CD4-positive, alpha-beta memory T cell (primary cell): ENCODE measurements at regions of chr15 and their contacts with region 1.

Region 1: GRCh38 chr15:73927476-73928240 is 1.4 kb downstream of the LOXL1 start:
- DNase-seq: peak; percentile 80 to 87 (median 84)
- H3K4me3 ChIP-seq: peak overlapping the region in 1 of 2 donors; percentile 58
- H3K4me3 Mint-ChIP-seq: peak overlapping the region; percentile 76 to 89 (median 84)
- H3K27ac ChIP-seq: peak overlapping the region; percentile 77
- H3K27ac Mint-ChIP-seq: peak overlapping the region; percentile 41 to 92 (median 85)
- H3K4me1 ChIP-seq: peaks cover 66% of the 10 kb centered on the region
- H3K4me1 Mint-ChIP-seq: peaks cover 30 to 67% (median 48%) of the 10 kb centered on the region in 4 donors
- H3K27me3 ChIP-seq: no peaks in the 10 kb centered on the region
- H3K27me3 Mint-ChIP-seq: no peaks in the 10 kb centered on the region

Region 2: GRCh38 chr15:73873889-73874511 is 53.7 kb before region 1 on chr15:
- CTCF ChIA-PET with region 1: interaction called, 20 read pairs
- POLR2A ChIA-PET with region 1: no interaction called
- intact Hi-C with region 1: loop called (anchors 2 kb)
- DNase-seq: peak in 4 of 5 donors; percentile 44 to 50 (median 46)
- H3K4me3 ChIP-seq: no peak overlapping the region
- H3K4me3 Mint-ChIP-seq: no peak overlapping the region
- H3K27ac ChIP-seq: no peak overlapping the region
- H3K27ac Mint-ChIP-seq: no peak overlapping the region
- H3K4me1 ChIP-seq: no peaks in the 10 kb centered on the region
- H3K4me1 Mint-ChIP-seq: no peaks in the 10 kb centered on the region
- H3K27me3 ChIP-seq: peaks cover 5% of the 10 kb centered on the region
- H3K27me3 Mint-ChIP-seq: peaks cover 31 to 33% of the 10 kb centered on the region in 2 donors

Region 3: DNA sequence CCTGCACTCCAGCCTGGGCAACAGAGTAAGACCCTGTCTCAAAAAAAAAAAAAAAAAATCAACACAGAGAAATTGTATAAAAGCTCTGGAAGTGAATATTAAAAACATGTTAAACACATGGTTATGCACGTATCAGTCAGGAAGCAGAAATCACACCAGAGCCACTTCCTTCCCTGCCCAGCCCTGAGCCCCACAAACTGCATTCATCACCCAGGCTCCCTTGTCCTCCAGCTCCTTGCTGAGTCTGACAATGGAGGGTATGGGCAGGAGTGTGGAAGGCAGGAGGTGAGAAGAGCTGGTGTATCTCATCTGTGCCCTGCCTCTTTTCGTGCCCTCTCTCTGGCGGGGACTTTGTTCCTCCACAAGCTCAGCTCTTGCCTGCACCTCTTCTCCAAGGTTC is 13.5 kb before region 1 on chr15:
- CTCF ChIA-PET with region 1: interaction called, 18 read pairs
- POLR2A ChIA-PET with region 1: interaction called, 7 read pairs
- intact Hi-C with region 1: no loop called
- DNase-seq: no peak
- H3K4me3 ChIP-seq: no peak overlapping the region
- H3K4me3 Mint-ChIP-seq: peak overlapping the region in 6 of 8 donors; percentile 12 to 49 (median 32)
- H3K27ac ChIP-seq: no peak overlapping the region
- H3K27ac Mint-ChIP-seq: peak overlapping the region in 3 of 7 donors; percentile 30 to 80 (median 71)
- H3K4me1 ChIP-seq: peaks cover 6% of the 10 kb centered on the region
- H3K4me1 Mint-ChIP-seq: peaks cover 6 to 31% (median 17%) of the 10 kb centered on the region in 4 donors
- H3K27me3 ChIP-seq: no peaks in the 10 kb centered on the region
- H3K27me3 Mint-ChIP-seq: peaks cover 0 to 2% of the 10 kb centered on the region in 2 donors

Region 4: GRCh38 chr15:73950831-73951561 is 23.3 kb after region 1 on chr15:
- CTCF ChIA-PET with region 1: interaction called, 16 read pairs
- POLR2A ChIA-PET with region 1: interaction called, 7 read pairs
- intact Hi-C with region 1: no loop called
- DNase-seq: peak; percentile 63 to 66 (median 64)
- H3K4me3 ChIP-seq: no peak overlapping the region
- H3K4me3 Mint-ChIP-seq: peak overlapping the region in 2 of 8 donors; percentile 39 to 59
- H3K27ac ChIP-seq: peak overlapping the region; percentile 5
- H3K27ac Mint-ChIP-seq: peak overlapping the region; percentile 19 to 97 (median 94)
- H3K4me1 ChIP-seq: peaks cover 5% of the 10 kb centered on the region
- H3K4me1 Mint-ChIP-seq: peaks cover 3 to 22% (median 6%) of the 10 kb centered on the region in 4 donors
- H3K27me3 ChIP-seq: no peaks in the 10 kb centered on the region
- H3K27me3 Mint-ChIP-seq: no peaks in the 10 kb centered on the region

Region 5: DNA sequence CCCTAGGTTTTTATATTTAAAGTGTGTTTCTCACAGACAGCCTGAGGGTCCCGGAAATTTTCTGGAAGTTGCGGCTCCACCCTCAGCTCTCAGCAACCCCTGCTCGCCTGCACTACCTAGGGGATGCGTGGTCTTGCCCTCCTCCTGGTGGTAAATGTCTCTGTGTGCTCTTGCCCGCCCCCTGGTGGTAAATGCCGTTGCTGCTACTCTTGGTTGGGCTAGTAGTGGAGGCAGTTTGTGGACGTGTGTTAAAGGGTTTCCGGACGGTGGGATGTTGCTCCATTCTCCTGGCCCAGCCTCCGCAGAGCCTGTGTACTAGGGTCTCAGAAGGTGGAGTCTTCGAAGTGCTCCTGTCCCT is 37.1 kb after region 1 on chr15:
- CTCF ChIA-PET with region 1: interaction called, 27 read pairs
- POLR2A ChIA-PET with region 1: interaction called, 10 read pairs
- intact Hi-C with region 1: loop called (anchors 2 kb)
- DNase-seq: peak; percentile 80 to 87 (median 83)
- H3K4me3 ChIP-seq: peak overlapping the region in 1 of 2 donors; percentile 64
- H3K4me3 Mint-ChIP-seq: peak overlapping the region; percentile 75 to 88 (median 84)
- H3K27ac ChIP-seq: peak overlapping the region; percentile 24
- H3K27ac Mint-ChIP-seq: peak overlapping the region; percentile 43 to 93 (median 77)
- H3K4me1 ChIP-seq: peaks cover 32% of the 10 kb centered on the region
- H3K4me1 Mint-ChIP-seq: peaks cover 24 to 41% (median 31%) of the 10 kb centered on the region in 4 donors
- H3K27me3 ChIP-seq: no peaks in the 10 kb centered on the region
- H3K27me3 Mint-ChIP-seq: no peaks in the 10 kb centered on the region

Region 6: DNA sequence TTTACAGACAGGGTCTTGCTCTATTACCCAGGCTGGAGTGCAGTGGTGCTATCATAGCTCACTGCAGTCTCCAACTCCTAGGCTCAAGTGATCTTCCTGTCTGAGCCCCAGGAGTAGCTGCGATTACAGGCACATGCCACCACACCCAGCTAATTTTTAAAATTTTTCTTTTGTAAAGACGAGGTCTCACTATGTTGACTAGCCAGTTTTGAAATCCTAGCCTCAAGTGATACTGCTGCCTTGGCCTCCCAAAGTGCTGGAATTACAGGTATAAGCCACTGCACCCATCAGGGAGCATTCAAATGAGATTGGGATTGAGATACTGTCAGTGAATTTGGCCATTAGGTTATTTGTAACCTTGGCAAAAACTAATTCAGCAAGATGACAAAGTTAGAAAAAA is 746.5 kb after region 1 on chr15:
- CTCF ChIA-PET with region 1: no interaction called
- POLR2A ChIA-PET with region 1: no interaction called
- intact Hi-C with region 1: no loop called
- DNase-seq: no peak
- H3K4me3 ChIP-seq: no peak overlapping the region
- H3K4me3 Mint-ChIP-seq: no peak overlapping the region
- H3K27ac ChIP-seq: no peak overlapping the region
- H3K27ac Mint-ChIP-seq: peak overlapping the region in 1 of 7 donors; percentile 11
- H3K4me1 ChIP-seq: no peaks in the 10 kb centered on the region
- H3K4me1 Mint-ChIP-seq: peaks cover 5 to 18% (median 10%) of the 10 kb centered on the region in 4 donors
- H3K27me3 ChIP-seq: no peaks in the 10 kb centered on the region
- H3K27me3 Mint-ChIP-seq: no peaks in the 10 kb centered on the region